Activated T-helper 1 cell treated with anti-CD3 and anti-CD28 coated beads, Interleukin-12 subunit alpha, Interleukin-12 subunit beta, Interleukin-2, Interleukin-4 antibody, amounts not matched to agents 30 ng/mL and 10 ng/mL and 1 ng/mL, durations not matched to agents 14 hours and 24 hours and 36 hours (primary cell): ENCODE measurements at regions of chr11 and their contacts with region 1.

Region 1: DNA sequence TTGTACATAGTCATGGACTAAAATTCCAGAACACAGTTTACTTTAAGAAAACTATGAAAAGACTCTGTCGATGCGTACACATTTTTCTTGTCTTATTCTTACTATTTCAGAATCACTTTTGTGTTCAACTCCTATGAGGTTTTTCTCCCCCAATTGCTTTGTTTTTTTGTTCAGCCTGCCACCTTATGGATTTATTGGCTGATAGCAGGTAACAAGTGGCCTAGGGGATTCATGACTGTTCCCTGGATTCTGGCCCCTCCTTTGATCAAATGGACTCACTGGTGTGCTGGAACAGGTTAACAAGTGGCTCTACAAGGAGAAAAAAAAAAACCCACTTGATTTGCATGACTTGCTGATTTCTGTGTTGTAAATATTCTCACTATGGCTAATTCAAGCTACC is 10.6 kb downstream of the MMP20 start:
- DNase-seq: no peak
- H3K4me3 Mint-ChIP-seq: no peak overlapping the region
- H3K27ac Mint-ChIP-seq: no peak overlapping the region
- H3K4me1 Mint-ChIP-seq: peaks cover 26% of the 10 kb centered on the region
- H3K27me3 Mint-ChIP-seq: peaks cover 4% of the 10 kb centered on the region

Region 2: DNA sequence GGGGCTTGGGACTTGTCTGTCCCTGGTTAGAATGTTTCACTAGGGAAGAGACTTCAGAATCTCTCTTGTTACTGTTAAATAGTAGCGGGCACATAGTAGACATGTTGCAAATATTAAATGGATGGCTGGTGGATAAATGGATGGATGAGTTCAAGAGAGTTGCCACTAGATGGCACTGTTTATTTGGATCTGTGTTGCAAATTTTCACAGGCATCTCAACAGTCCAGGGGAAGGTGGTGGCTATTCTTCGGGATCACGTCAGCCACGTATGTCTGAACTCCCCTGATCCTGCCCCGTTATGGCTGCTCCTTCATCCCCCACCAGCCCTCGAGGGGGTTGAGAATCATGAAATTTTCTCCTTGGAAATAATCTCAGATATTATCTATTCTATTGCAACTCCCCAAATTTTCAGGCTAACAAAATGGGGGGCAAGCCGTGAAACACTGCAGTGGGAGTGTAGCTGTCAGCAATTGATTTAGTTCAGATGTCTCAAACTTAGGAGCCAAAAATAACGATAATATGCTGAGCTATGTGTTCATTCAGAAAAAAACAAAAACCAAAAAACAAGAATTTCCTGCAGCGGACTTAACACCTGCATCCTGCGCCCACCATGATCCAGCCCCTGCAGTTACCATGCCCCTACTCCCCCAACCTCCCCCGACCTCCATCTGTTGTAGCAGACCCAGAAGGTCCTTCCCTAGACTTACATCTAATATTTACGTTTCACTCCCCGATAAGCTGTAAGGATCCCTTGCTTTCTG is 326.3 kb before region 1 on chr11:
- intact Hi-C with region 1: loop called (anchors 1 kb)
- DNase-seq: peak; percentile 24
- H3K4me3 Mint-ChIP-seq: peak overlapping the region; percentile 8
- H3K27ac Mint-ChIP-seq: peak overlapping the region; percentile 35
- H3K4me1 Mint-ChIP-seq: peaks cover 39% of the 10 kb centered on the region
- H3K27me3 Mint-ChIP-seq: no peaks in the 10 kb centered on the region

Region 3: GRCh38 chr11:102367364-102367763 is 247.1 kb before region 1 on chr11:
- intact Hi-C with region 1: loop called (anchors 1 kb)
- DNase-seq: no peak
- H3K4me3 Mint-ChIP-seq: no peak overlapping the region
- H3K27ac Mint-ChIP-seq: no peak overlapping the region
- H3K4me1 Mint-ChIP-seq: peaks cover 26% of the 10 kb centered on the region
- H3K27me3 Mint-ChIP-seq: no peaks in the 10 kb centered on the region

Region 4: GRCh38 chr11:102495161-102496042 is 119.1 kb before region 1 on chr11:
- intact Hi-C with region 1: loop called (anchors 1 kb)
- DNase-seq: peak; percentile 18
- H3K4me3 Mint-ChIP-seq: no peak overlapping the region
- H3K27ac Mint-ChIP-seq: no peak overlapping the region
- H3K4me1 Mint-ChIP-seq: peaks cover 30% of the 10 kb centered on the region
- H3K27me3 Mint-ChIP-seq: peaks cover 2% of the 10 kb centered on the region

Region 5: GRCh38 chr11:102560555-102561011 is 53.9 kb before region 1 on chr11:
- intact Hi-C with region 1: loop called (anchors 5 kb)
- DNase-seq: no peak
- H3K4me3 Mint-ChIP-seq: peak overlapping the region; percentile 63
- H3K27ac Mint-ChIP-seq: no peak overlapping the region
- H3K4me1 Mint-ChIP-seq: peaks cover 50% of the 10 kb centered on the region
- H3K27me3 Mint-ChIP-seq: peaks cover 2% of the 10 kb centered on the region

Region 6: GRCh38 chr11:102599642-102600261 is 14.7 kb before region 1 on chr11:
- intact Hi-C with region 1: loop called (anchors 1 kb)
- DNase-seq: no peak
- H3K4me3 Mint-ChIP-seq: no peak overlapping the region
- H3K27ac Mint-ChIP-seq: peak overlapping the region; percentile 64
- H3K4me1 Mint-ChIP-seq: peaks cover 47% of the 10 kb centered on the region
- H3K27me3 Mint-ChIP-seq: no peaks in the 10 kb centered on the region